A673 (cell line): ENCODE measurements at regions of chr3 and their contacts with region 1.

Region 1: DNA sequence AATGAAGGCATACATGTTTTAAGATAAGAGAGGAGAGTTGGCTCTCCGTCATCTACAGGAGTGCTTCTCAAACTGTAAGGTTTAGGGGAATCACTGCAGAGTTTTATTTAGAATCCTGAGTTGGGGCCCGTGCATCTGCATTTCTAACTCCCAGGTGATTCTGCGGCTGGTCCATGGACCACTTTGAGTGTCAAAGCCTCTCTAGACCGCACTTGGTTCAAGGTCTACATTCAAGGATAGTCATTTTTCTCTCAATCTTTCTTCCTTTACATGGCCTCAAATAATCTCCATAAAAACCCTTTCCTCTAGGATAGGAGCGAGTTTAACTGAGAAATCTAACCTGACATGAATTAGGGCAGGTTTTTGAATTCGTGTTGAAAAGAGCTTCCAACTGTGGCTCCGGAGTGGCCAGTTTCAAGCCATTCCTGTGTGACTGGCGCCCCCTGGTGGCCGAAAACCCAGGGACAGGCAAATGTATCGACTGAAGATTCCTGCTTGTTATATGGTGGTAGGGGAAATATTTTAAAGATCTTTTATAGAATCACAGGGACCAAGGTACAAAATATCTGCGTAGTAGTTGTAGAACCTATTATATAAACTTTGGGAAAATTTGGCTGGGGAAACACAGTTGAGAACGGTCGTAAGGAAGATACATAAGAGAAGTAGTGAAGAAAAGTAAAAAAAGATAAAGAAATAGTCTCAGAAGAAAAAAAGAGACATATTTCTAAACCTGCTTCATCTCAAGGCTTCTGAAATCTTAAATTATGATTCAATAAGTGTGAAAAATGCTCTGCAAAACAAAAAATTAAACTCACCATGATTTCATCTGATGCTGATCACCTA is 11.9 kb downstream of the GABRR3 start:
- DNase-seq: peak; percentile 85
- H3K4me3 ChIP-seq: no peak overlapping the region
- H3K27ac ChIP-seq: no peak overlapping the region
- H3K4me1 ChIP-seq: peaks cover 8% of the 10 kb centered on the region
- H3K27me3 ChIP-seq: no peaks in the 10 kb centered on the region
- CTCF ChIP-seq: peak; percentile 95

Region 2: DNA sequence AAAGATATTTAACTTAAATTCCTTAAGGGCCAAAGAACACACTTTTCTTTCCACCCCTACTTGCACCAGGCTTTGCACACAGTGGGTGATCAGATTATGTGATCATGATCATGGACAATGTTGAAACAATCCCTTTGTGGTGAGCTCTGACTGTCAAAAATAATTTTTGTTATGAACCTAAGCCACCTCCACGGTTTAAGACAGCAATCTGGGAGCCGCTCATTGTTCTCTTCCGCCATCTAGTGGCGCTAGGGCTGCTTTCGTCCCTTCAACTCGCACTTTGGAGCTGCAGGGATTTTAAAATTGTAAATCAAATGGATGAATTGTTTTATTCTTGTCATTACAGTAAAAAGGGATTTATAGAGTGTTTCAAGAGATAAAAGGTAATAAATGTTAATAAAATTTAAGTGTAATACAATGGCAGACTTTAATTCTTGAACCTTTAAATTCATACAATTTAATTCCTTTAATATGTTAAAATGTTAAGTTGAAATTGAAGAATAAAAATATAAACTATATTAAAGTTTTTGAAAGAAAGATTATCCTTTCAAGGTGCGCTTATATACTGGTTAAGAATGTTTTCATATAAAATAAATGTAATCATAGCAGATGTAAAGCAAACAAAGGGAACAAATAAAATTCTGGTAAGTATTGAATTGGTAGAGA is 303.9 kb before region 1 on chr3:
- CTCF ChIA-PET with region 1: interaction called, 8 read pairs
- POLR2A ChIA-PET with region 1: no interaction called
- intact Hi-C with region 1: loop called (anchors 10 kb)
- DNase-seq: peak; percentile 81
- H3K4me3 ChIP-seq: no peak overlapping the region
- H3K27ac ChIP-seq: no peak overlapping the region
- H3K4me1 ChIP-seq: no peaks in the 10 kb centered on the region
- H3K27me3 ChIP-seq: no peaks in the 10 kb centered on the region
- CTCF ChIP-seq: peak; percentile 96